ENCODE measurements at regions of chr2 and their contacts with region 1.

Region 1: DNA sequence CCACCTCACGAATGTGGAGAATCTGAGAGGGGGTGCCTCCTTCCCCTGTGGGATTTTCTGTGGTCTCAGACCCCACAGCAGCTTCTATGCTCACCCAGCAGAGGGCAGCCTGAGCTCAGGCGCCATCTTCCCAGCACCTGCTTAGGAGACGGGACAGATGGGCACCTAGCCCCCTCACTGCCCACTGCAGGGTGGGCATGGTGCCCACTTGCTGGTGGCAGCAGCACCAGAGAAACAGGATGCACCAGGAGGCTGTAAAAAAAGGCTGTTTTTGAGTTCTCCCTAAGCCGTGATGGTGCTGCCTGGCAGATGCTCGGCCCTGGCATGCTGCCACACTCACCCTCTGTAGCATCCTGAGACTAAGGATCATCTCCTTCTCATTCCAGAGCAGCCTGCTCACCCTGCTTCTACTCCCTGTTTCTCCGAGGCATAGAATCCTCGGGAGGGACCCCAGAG is 19.1 kb upstream of the SLC20A1 start:
- DNase-seq: peak; percentile 65 to 67
- H3K4me3 ChIP-seq: no peak overlapping the region
- H3K4me3 Mint-ChIP-seq: no peak overlapping the region
- H3K27ac Mint-ChIP-seq: no peak overlapping the region
- H3K4me1 ChIP-seq: peaks cover 15% of the 10 kb centered on the region
- H3K4me1 Mint-ChIP-seq: peaks cover 8% of the 10 kb centered on the region
- H3K27me3 ChIP-seq: no peaks in the 10 kb centered on the region
- H3K27me3 Mint-ChIP-seq: no peaks in the 10 kb centered on the region
- CTCF ChIP-seq: peak; percentile 66 to 92

Region 2: GRCh38 chr2:112075490-112076260 is 551.0 kb before region 1 on chr2:
- CTCF ChIA-PET with region 1: no interaction called
- POLR2A ChIA-PET with region 1: no interaction called
- intact Hi-C with region 1: no loop called
- DNase-seq: no peak
- H3K4me3 ChIP-seq: no peak overlapping the region
- H3K4me3 Mint-ChIP-seq: no peak overlapping the region
- H3K27ac Mint-ChIP-seq: no peak overlapping the region
- H3K4me1 ChIP-seq: peaks cover 15% of the 10 kb centered on the region
- H3K4me1 Mint-ChIP-seq: peaks cover 9% of the 10 kb centered on the region
- H3K27me3 ChIP-seq: no peaks in the 10 kb centered on the region
- H3K27me3 Mint-ChIP-seq: no peaks in the 10 kb centered on the region
- CTCF ChIP-seq: no peak

Region 3: GRCh38 chr2:112692496-112692911 is 65.9 kb after region 1 on chr2:
- CTCF ChIA-PET with region 1: interaction called, 6 read pairs
- POLR2A ChIA-PET with region 1: no interaction called
- intact Hi-C with region 1: loop called (anchors 1 kb)
- DNase-seq: peak; percentile 72 to 86
- H3K4me3 ChIP-seq: no peak overlapping the region
- H3K4me3 Mint-ChIP-seq: no peak overlapping the region
- H3K27ac Mint-ChIP-seq: peak overlapping the region; percentile 17
- H3K4me1 ChIP-seq: peaks cover 10% of the 10 kb centered on the region
- H3K4me1 Mint-ChIP-seq: peaks cover 16% of the 10 kb centered on the region
- H3K27me3 ChIP-seq: no peaks in the 10 kb centered on the region
- H3K27me3 Mint-ChIP-seq: no peaks in the 10 kb centered on the region
- CTCF ChIP-seq: no peak